Endothelial cell of umbilical vein (primary cell): ENCODE measurements at regions of chr9 and their contacts with region 1.

Region 1: GRCh38 chr9:124861342-124862229 is at the starts of genes ARPC5L and RPL35:
- DNase-seq: peak; percentile 94
- H3K4me3 ChIP-seq: peak within 1 kb of the TSS; percentile 64 to 67 (median 64)
- H3K27ac ChIP-seq: peak within 1 kb of the TSS; percentile 63
- H3K4me1 ChIP-seq: peaks cover 22% of the 10 kb centered on the region
- H3K27me3 ChIP-seq: no peaks in the 10 kb centered on the region
- CTCF ChIP-seq: peak; percentile 15 to 18
- POLR2A ChIP-seq: peak; percentile 96
- total RNA-seq, gene ARPC5L: 67.7 and 68.1 TPM in 2 replicates
- total RNA-seq, gene RPL35: 1,181 and 1,230 TPM in 2 replicates

Region 2: GRCh38 chr9:124658165-124659017 is 203.2 kb before region 1 on chr9:
- CTCF ChIA-PET with region 1: no interaction called
- POLR2A ChIA-PET with region 1: no interaction called
- dilution Hi-C with region 1: no loop called
- intact Hi-C with region 1: loop called (anchors 2 kb)
- DNase-seq: peak; percentile 95
- H3K4me3 ChIP-seq: peak overlapping the region; percentile 53 to 100 (median 99)
- H3K27ac ChIP-seq: peak overlapping the region; percentile 98
- H3K4me1 ChIP-seq: peaks cover 33% of the 10 kb centered on the region
- H3K27me3 ChIP-seq: no peaks in the 10 kb centered on the region
- CTCF ChIP-seq: no peak
- POLR2A ChIP-seq: peak; percentile 99

Region 3: GRCh38 chr9:124776954-124777665 is 84.5 kb before region 1 on chr9 and contains the start of gene OLFML2A:
- CTCF ChIA-PET with region 1: interaction called, 967 read pairs
- POLR2A ChIA-PET with region 1: interaction called, 11 read pairs
- dilution Hi-C with region 1: no loop called
- intact Hi-C with region 1: no loop called
- DNase-seq: no peak
- H3K4me3 ChIP-seq: peak within 1 kb of the TSS in 2 of 3 experiments; percentile 1 to 30
- H3K27ac ChIP-seq: no peak within 1 kb of the TSS
- H3K4me1 ChIP-seq: peaks cover 15% of the 10 kb centered on the region
- H3K27me3 ChIP-seq: peaks cover 0 to 7% of the 10 kb centered on the region in 2 experiments
- CTCF ChIP-seq: peak; percentile 28 to 47
- POLR2A ChIP-seq: no peak
- total RNA-seq, gene OLFML2A: 0.32 and 1.1 TPM in 2 replicates

Region 4: DNA sequence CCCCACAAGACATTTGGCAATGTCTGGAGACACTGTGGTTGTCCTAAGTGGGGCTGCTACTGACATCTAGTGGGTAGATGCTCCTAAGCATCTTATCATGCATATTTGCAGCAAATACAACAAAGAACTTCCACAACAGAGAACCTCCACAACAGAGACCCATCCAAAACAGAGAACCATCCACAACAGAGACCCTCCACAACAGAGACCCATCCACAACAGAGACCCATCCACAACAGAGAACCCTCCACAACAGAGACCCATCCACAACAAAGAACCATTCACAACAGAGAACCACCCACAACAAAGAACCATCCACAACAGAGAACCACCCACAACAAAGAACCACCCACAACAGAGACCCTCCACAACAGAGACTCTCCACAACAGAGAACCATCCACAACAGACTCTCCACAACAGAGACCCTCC is 33.2 kb after region 1 on chr9:
- CTCF ChIA-PET with region 1: interaction called, 3 read pairs
- POLR2A ChIA-PET with region 1: no interaction called
- dilution Hi-C with region 1: no loop called
- intact Hi-C with region 1: loop called (anchors 1 kb)
- DNase-seq: peak; percentile 57
- H3K4me3 ChIP-seq: no peak overlapping the region
- H3K27ac ChIP-seq: no peak overlapping the region
- H3K4me1 ChIP-seq: no peaks in the 10 kb centered on the region
- H3K27me3 ChIP-seq: no peaks in the 10 kb centered on the region
- CTCF ChIP-seq: peak; percentile 43 to 58
- POLR2A ChIP-seq: no peak

Region 5: DNA sequence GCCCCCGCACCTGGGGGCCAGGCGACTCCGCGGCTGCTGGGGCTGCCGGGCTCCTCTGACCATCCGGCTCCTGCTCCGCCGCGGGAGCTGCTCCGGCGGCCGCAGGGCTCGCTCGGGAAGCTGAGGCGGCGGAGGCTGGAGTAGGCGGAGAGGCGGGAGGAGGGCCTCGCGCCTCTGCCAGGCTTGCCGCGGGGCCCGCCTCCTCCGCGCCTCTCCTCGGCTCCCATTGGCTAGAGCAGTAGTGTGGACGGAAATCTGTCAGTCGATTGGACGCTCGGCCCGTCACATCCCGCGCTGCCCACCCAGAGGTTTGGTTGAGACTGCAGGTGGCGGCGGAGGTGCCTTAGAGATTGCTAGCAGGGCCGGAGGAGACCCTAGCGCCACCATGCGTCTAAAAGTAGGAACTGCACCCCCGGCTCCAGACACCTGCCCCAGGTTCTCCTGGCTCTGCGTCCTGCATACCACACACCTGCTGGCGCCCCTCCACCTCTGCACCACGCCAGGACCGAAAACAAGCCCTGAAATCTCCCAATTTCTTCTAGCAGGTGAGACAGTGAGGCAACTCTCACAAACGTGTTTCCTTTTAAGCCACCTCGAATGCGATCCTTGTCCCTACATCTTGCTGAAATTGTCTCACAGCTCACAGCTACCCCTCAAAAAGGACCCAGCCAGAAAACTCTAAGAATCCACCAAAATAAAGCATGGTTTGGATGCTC is 281.9 kb after region 1 on chr9 and contains the start of gene SCAI:
- CTCF ChIA-PET with region 1: interaction called, 4 read pairs
- POLR2A ChIA-PET with region 1: no interaction called
- dilution Hi-C with region 1: no loop called
- intact Hi-C with region 1: loop called (anchors 1 kb)
- DNase-seq: peak; percentile 99
- H3K4me3 ChIP-seq: peak within 1 kb of the TSS; percentile 19 to 74 (median 59)
- H3K27ac ChIP-seq: no peak within 1 kb of the TSS
- H3K4me1 ChIP-seq: peaks cover 6% of the 10 kb centered on the region
- H3K27me3 ChIP-seq: no peaks in the 10 kb centered on the region
- CTCF ChIP-seq: peak; percentile 94 to 99
- POLR2A ChIP-seq: peak; percentile 71
- total RNA-seq, gene SCAI: 6.9 and 9.3 TPM in 2 replicates

Region 6: DNA sequence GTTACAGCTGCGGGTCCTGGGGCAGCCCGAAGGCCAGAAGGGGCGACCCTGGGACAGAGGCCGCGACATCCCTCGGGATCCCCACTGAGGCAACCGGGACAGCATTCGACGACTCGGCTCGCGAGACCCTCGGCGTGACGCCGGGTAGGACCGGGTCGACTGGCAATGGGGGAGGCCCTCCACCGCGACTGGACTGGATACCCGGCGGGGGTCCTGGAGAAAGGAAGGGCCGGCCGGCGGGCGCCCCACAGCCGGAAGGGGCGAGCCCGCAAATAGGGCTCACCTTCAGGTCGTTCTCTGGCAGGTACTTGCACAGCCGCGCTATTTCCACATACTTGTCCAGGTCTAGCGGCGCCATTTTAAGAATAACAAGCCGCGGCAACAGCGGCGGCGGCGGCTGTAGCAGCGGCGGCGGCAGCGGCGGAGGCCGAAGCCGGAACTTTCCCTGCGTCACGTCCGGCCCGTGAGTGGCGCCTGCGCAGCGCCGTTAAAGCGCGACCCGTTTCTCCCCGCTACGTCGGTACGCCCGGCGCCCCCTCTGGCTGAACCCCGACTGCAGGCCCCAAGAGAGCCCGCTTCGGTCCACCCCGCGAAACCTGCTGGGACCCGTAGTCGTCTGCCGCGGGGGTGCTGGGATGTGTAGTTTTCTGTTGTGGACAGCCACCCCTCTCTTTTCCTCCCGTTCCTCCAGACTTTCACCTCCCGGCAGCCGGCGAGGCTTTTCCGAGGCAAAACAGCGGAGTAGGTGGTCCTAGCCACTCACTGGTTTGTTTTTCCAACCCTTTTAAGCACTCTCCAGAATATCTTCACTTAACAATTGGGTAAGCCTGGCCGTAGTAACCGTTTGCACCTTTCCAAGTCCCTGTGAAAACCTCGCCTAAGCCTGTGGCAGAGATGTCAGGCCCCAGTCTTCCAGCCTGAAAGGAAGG is 328.0 kb after region 1 on chr9 and contains the start of gene PPP6C:
- CTCF ChIA-PET with region 1: no interaction called
- POLR2A ChIA-PET with region 1: no interaction called
- dilution Hi-C with region 1: no loop called
- intact Hi-C with region 1: loop called (anchors 5 kb)
- DNase-seq: peak; percentile 98
- H3K4me3 ChIP-seq: peak within 1 kb of the TSS; percentile 70 to 90 (median 78)
- H3K27ac ChIP-seq: peak within 1 kb of the TSS; percentile 66
- H3K4me1 ChIP-seq: peaks cover 7% of the 10 kb centered on the region
- H3K27me3 ChIP-seq: no peaks in the 10 kb centered on the region
- CTCF ChIP-seq: peak; percentile 76 to 88
- POLR2A ChIP-seq: peak; percentile 91
- total RNA-seq, gene PPP6C: 42.1 and 42.6 TPM in 2 replicates

Region 7: GRCh38 chr9:125241000-125241862 is 379.6 kb after region 1 on chr9 and contains the start of gene HSPA5:
- CTCF ChIA-PET with region 1: interaction called, 4 read pairs
- POLR2A ChIA-PET with region 1: interaction called, 4 read pairs
- dilution Hi-C with region 1: no loop called
- intact Hi-C with region 1: loop called (anchors 5 kb)
- DNase-seq: peak; percentile 100
- H3K4me3 ChIP-seq: peak within 1 kb of the TSS; percentile 77 to 97 (median 96)
- H3K27ac ChIP-seq: peak within 1 kb of the TSS; percentile 89
- H3K4me1 ChIP-seq: peaks cover 43% of the 10 kb centered on the region
- H3K27me3 ChIP-seq: no peaks in the 10 kb centered on the region
- CTCF ChIP-seq: peak in 1 of 2 donors; percentile 22
- POLR2A ChIP-seq: peak; percentile 100
- total RNA-seq, gene HSPA5: 514 and 538 TPM in 2 replicates